Activated T-helper 2 cell treated with anti-CD3 and anti-CD28 coated beads, Interferon-gamma antibody, Interleukin-2, Interleukin-4, amounts not matched to agents 10 μg/mL and 5 μg/mL and 100 μg/mL, durations not matched to agents 14 hours and 24 hours and 36 hours (primary cell): ENCODE measurements at regions of chr1 and their contacts with region 1.

Region 1: GRCh38 chr1:246450611-246451251 is 56.3 kb downstream of the SMYD3 start:
- DNase-seq: no peak
- H3K4me3 Mint-ChIP-seq: no peak overlapping the region
- H3K27ac Mint-ChIP-seq: no peak overlapping the region
- H3K4me1 Mint-ChIP-seq: peaks cover 4% of the 10 kb centered on the region
- H3K27me3 Mint-ChIP-seq: no peaks in the 10 kb centered on the region

Region 2: DNA sequence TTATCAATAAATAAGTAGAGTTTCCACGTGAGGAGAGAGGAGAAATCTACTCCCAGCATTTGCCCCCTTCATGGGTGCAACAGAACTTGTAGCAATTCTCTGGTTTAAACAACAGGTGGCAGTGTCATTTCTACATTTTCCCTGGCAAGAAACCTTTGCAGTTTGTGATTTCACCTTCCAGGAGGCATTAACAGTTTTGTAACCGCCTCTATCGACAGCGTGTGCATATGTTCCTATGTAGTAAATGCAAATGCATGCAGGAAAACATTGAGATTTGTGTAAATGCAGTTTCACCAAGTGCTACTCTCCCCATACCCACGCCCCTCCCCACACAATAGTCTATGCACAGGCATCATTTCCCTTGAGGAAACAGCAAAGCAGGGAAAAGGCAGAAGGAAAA is 438.4 kb before region 1 on chr1:
- intact Hi-C with region 1: loop called (anchors 1 kb)
- DNase-seq: no peak
- H3K4me3 Mint-ChIP-seq: no peak overlapping the region
- H3K27ac Mint-ChIP-seq: no peak overlapping the region
- H3K4me1 Mint-ChIP-seq: no peaks in the 10 kb centered on the region
- H3K27me3 Mint-ChIP-seq: no peaks in the 10 kb centered on the region